HCT116 (cell line): ENCODE measurements at regions of chr13 and their contacts with region 1.

Region 1: DNA sequence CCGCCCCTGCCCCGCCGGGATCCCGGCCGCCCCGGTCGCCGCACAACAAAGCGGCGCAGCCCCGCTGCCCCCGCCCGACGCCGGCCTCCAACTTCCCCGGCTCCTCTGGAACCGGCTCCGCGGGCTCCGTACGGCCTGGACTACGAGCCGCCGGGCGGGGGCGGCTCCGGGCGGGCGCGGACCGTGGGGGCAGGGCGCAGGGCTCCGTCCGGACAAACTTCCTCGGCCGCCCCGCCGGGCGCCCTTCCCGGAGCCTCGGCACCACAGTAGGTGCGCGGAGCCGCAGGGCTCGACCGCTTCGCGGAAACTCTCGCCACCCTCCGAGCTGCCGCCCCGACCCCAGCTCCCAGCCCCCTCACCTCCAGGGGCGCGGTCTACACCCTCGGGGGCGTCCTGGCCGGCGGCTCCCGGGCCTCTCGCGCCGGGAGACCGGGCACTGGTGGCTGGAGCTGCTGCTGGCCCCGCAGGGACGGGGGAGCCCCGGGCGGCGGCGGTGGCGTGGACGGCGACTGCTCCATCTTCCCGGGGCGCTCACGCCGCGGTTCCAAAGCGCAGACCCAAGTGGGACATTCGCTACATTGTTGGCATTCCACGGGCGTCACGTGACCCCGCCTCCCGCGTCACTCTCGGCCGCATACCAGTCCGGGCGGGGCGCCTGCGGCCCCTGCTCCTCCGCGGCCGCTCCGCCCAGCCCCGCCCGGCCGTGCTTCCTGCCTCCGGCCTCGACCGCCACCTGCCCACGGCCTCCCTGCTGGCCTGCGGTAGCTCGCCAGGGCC is at the start of gene LATS2:
- DNase-seq: peak; percentile 82
- ATAC-seq: peak; percentile 88
- H3K4me3 ChIP-seq: peak within 1 kb of the TSS; percentile 64 to 85
- H3K27ac ChIP-seq: peak within 1 kb of the TSS; percentile 96
- H3K4me1 ChIP-seq: peaks cover 24 to 29% of the 10 kb centered on the region in 2 experiments
- H3K27me3 ChIP-seq: no peaks in the 10 kb centered on the region
- CTCF ChIP-seq: 0 out of 6 replicates have a peak, but pooled peaks of 1 of the 3 experiments have one; percentile 6
- POLR2A ChIP-seq: peak; percentile 38
- RAD21 ChIP-seq: 0 out of 2 replicates have a peak, but pooled peaks have one; percentile 20
- total RNA-seq, gene LATS2: 18.8 TPM

Region 2: GRCh38 chr13:21016487-21016886 is 44.7 kb before region 1 on chr13:
- CTCF ChIA-PET with region 1: interaction called, 3 read pairs
- POLR2A ChIA-PET with region 1: no interaction called
- RAD21 ChIA-PET with region 1: no interaction called
- intact Hi-C with region 1: loop called (anchors 2 kb)
- DNase-seq: no peak
- ATAC-seq: no peak
- H3K4me3 ChIP-seq: no peak overlapping the region
- H3K27ac ChIP-seq: peak overlapping the region; percentile 46; the same call in 1 of the 2 replicates
- H3K4me1 ChIP-seq: peaks cover 29 to 34% of the 10 kb centered on the region in 2 experiments
- H3K27me3 ChIP-seq: no peaks in the 10 kb centered on the region
- CTCF ChIP-seq: no peak
- POLR2A ChIP-seq: no peak
- RAD21 ChIP-seq: no peak

Region 3: GRCh38 chr13:21043898-21044297 is 17.3 kb before region 1 on chr13:
- CTCF ChIA-PET with region 1: no interaction called
- POLR2A ChIA-PET with region 1: no interaction called
- RAD21 ChIA-PET with region 1: no interaction called
- intact Hi-C with region 1: no loop called
- DNase-seq: no peak
- ATAC-seq: no peak
- H3K4me3 ChIP-seq: no peak overlapping the region
- H3K27ac ChIP-seq: no peak overlapping the region
- H3K4me1 ChIP-seq: no peaks in the 10 kb centered on the region
- H3K27me3 ChIP-seq: no peaks in the 10 kb centered on the region
- CTCF ChIP-seq: no peak
- POLR2A ChIP-seq: no peak
- RAD21 ChIP-seq: no peak

Region 4: GRCh38 chr13:21075011-21075898 is 14.1 kb after region 1 on chr13:
- CTCF ChIA-PET with region 1: no interaction called
- POLR2A ChIA-PET with region 1: no interaction called
- RAD21 ChIA-PET with region 1: no interaction called
- intact Hi-C with region 1: no loop called
- DNase-seq: no peak
- ATAC-seq: no peak
- H3K4me3 ChIP-seq: no peak overlapping the region
- H3K27ac ChIP-seq: no peak overlapping the region
- H3K4me1 ChIP-seq: no peaks in the 10 kb centered on the region
- H3K27me3 ChIP-seq: no peaks in the 10 kb centered on the region
- CTCF ChIP-seq: no peak
- POLR2A ChIP-seq: no peak
- RAD21 ChIP-seq: no peak